ENCODE measurements at regions of chr21 and their contacts with region 1.

Region 1: DNA sequence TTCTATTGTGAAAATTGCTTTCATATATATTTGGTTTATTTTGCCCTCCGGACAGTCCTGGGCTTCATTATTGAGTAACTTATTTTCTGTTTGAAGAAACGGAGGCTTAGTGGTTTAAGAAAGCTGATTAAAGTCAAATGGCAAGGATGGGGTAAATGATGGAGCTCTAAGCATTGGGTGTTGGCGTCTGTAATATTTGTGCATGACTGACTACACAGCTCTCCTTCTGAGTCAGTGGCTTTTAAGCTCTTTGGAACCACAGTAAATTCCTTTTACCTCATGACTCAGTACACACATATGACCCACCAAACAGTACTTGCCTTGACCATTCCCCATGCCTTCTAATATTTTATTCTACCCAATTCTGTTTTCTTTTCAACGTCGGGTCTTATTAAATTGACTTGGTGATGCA is 21.0 kb downstream of the B3GALT5 start:
- DNase-seq: peak; percentile 95
- ATAC-seq: peak; percentile 83
- H3K4me3 ChIP-seq: peak overlapping the region; percentile 48
- H3K27ac ChIP-seq: peak overlapping the region; percentile 95
- H3K4me1 ChIP-seq: peaks cover 72% of the 10 kb centered on the region
- H3K27me3 ChIP-seq: no peaks in the 10 kb centered on the region
- CTCF ChIP-seq: no peak

Region 2: GRCh38 chr21:39189857-39190604 is 443.7 kb before region 1 on chr21:
- CTCF ChIA-PET with region 1: no interaction called
- POLR2A ChIA-PET with region 1: no interaction called
- intact Hi-C with region 1: loop called (anchors 10 kb)
- DNase-seq: no peak
- ATAC-seq: peak; percentile 50
- H3K4me3 ChIP-seq: no peak overlapping the region
- H3K27ac ChIP-seq: no peak overlapping the region
- H3K4me1 ChIP-seq: peaks cover 6% of the 10 kb centered on the region; the same call in 1 of the 2 replicates
- H3K27me3 ChIP-seq: no peaks in the 10 kb centered on the region
- CTCF ChIP-seq: no peak

Region 3: DNA sequence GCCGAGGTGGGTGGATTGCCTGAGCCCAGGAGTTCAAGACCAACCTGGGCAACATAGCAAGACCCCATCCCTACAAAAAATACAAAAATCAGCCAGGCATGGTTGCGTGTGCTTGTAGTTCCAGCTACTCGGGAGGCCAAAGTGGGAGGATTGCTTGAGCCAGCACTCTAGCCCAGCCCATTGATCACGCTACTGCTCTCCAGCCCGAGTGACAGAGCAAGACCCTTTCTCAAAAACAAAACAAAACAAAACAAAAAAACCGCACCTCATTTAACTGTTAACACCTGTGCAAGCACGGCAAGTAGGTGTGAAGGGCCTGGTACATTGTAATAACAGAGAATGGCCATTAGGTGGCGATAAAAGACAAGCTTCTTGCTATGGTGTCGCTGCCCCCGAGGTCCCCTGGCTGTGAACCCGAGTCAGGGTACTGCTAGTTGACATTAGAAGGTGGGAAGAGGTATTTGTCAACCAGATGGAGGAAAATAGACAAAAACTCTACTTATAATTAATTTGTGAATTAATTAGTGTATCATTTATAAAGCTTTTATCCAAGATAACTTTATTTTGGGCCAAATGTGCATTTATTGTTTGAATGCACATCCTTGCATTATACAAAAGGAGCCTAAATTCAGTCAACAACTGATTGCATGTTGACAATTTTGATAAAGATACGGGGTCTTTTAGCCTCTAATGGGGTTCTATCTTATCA is 115.5 kb before region 1 on chr21:
- CTCF ChIA-PET with region 1: interaction called, 12 read pairs
- POLR2A ChIA-PET with region 1: no interaction called
- intact Hi-C with region 1: loop called (anchors 1 kb)
- DNase-seq: peak; percentile 82
- ATAC-seq: peak; percentile 97
- H3K4me3 ChIP-seq: no peak overlapping the region
- H3K27ac ChIP-seq: no peak overlapping the region
- H3K4me1 ChIP-seq: peaks cover 5% of the 10 kb centered on the region; the same call in 1 of the 2 replicates
- H3K27me3 ChIP-seq: no peaks in the 10 kb centered on the region
- CTCF ChIP-seq: peak; percentile 96

Region 4: DNA sequence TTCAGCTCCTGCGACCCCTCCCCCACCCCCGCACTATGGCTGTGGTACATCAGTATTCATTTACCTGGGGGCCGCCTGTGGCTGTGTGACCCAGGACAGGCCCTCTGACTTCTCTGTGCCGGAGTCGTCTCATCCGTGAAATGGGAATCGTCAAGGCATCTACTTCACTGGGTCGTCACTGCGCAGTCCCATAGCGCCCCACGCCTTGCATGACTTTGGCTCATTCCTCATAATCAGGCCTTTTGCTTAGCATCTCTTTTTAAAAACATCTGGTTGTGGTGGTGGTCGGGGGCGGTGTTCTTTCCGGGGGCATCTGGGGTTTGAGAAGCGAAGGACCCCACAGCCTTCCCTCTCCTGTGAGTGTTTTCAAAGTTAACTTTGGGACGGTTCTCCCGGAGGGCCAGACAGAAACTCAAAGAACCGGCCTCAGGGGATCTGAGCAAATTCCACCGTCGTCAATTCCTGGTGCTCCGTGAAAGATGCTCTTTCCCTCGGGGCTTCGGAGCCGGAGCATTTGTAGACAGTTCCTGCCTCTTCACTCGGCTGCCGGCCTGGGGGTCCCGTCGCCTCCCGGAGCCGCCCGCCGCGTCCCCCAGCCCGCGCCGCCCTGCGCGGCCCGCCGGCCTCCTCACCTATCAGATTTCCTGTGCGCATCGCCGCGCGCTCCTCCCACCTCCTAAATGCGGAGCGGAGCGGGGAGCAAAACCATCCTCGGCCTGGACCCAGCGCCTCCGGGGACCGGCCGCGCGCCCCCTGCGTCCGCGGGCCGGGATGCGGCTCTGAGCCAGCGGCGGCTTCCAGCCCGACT is 21.3 kb before region 1 on chr21 and contains the start of gene B3GALT5:
- CTCF ChIA-PET with region 1: no interaction called
- POLR2A ChIA-PET with region 1: interaction called, 4 read pairs
- intact Hi-C with region 1: loop called (anchors 1 kb)
- DNase-seq: peak; percentile 45
- ATAC-seq: peak; percentile 42
- H3K4me3 ChIP-seq: peak within 1 kb of the TSS; percentile 68
- H3K27ac ChIP-seq: no peak within 1 kb of the TSS
- H3K4me1 ChIP-seq: peaks cover 32% of the 10 kb centered on the region
- H3K27me3 ChIP-seq: 0 out of 2 replicates have a peak, but pooled peaks cover 3% of the 10 kb centered on the region
- CTCF ChIP-seq: no peak
- total RNA-seq, gene B3GALT5: 0.58 and 1.5 TPM in 2 replicates

Region 5: DNA sequence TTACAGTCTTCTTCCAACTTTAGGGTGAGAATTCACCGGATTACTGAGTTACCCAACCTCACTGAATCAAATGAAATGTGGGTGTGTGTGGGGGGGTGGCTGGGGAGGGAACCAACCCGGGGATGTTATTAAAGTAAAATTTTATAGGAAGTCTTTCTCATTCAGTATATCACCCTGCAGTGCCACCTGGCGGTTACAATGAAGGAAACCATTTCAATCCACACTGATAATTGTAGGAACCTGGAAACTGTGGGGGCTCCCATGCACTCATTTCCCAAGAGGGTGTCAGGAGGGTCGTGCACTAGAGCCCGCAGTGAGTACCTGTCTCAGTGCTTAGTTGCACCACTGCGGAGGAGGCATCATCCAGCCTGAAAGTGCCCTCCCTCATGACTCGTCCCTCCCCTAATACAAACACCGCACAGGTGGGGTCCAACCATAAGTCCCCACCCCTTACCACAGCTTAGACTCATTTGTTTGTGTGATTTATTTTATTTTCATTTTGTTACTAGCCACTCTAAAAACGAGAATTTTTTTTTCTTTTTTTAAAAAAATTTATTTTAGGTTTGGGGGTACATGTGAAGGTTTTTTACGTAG is 82.1 kb after region 1 on chr21:
- CTCF ChIA-PET with region 1: interaction called, 3 read pairs
- POLR2A ChIA-PET with region 1: no interaction called
- intact Hi-C with region 1: loop called (anchors 1 kb)
- DNase-seq: peak; percentile 70
- ATAC-seq: peak; percentile 63
- H3K4me3 ChIP-seq: no peak overlapping the region
- H3K27ac ChIP-seq: no peak overlapping the region
- H3K4me1 ChIP-seq: no peaks in the 10 kb centered on the region
- H3K27me3 ChIP-seq: no peaks in the 10 kb centered on the region
- CTCF ChIP-seq: peak; percentile 82